ENCODE measurements at regions of chr20 and their contacts with region 1.

Region 1: GRCh38 chr20:45362804-45363610 is at the start of gene SYS1:
- DNase-seq: peak; percentile 99
- H3K4me3 Mint-ChIP-seq: peak within 1 kb of the TSS; percentile 97
- H3K27ac Mint-ChIP-seq: peak within 1 kb of the TSS; percentile 95
- H3K4me1 Mint-ChIP-seq: peaks cover 30% of the 10 kb centered on the region
- H3K27me3 Mint-ChIP-seq: no peaks in the 10 kb centered on the region
- CTCF ChIP-seq: peak; percentile 67
- total RNA-seq, gene SYS1: 19.1 and 28.2 TPM in 2 replicates

Region 2: GRCh38 chr20:45337367-45338120 is 25.5 kb before region 1 on chr20:
- CTCF ChIA-PET with region 1: interaction called, 82 read pairs
- POLR2A ChIA-PET with region 1: interaction called, 1,328 read pairs
- intact Hi-C with region 1: loop called (anchors 1 kb)
- DNase-seq: peak; percentile 66
- H3K4me3 Mint-ChIP-seq: peak overlapping the region; percentile 45
- H3K27ac Mint-ChIP-seq: peak overlapping the region; percentile 97
- H3K4me1 Mint-ChIP-seq: peaks cover 58% of the 10 kb centered on the region
- H3K27me3 Mint-ChIP-seq: no peaks in the 10 kb centered on the region
- CTCF ChIP-seq: no peak

Region 3: GRCh38 chr20:45373353-45374100 is 10.5 kb after region 1 on chr20:
- CTCF ChIA-PET with region 1: interaction called, 61 read pairs
- POLR2A ChIA-PET with region 1: interaction called, 7 read pairs
- intact Hi-C with region 1: no loop called
- DNase-seq: peak; percentile 92
- H3K4me3 Mint-ChIP-seq: peak overlapping the region; percentile 40
- H3K27ac Mint-ChIP-seq: no peak overlapping the region
- H3K4me1 Mint-ChIP-seq: peaks cover 5% of the 10 kb centered on the region
- H3K27me3 Mint-ChIP-seq: no peaks in the 10 kb centered on the region
- CTCF ChIP-seq: peak; percentile 74

Region 4: GRCh38 chr20:45406259-45407066 is 43.5 kb after region 1 on chr20:
- CTCF ChIA-PET with region 1: interaction called, 10 read pairs
- POLR2A ChIA-PET with region 1: interaction called, 4 read pairs
- intact Hi-C with region 1: no loop called
- DNase-seq: peak; percentile 40
- H3K4me3 Mint-ChIP-seq: peak overlapping the region; percentile 71
- H3K27ac Mint-ChIP-seq: no peak overlapping the region
- H3K4me1 Mint-ChIP-seq: no peaks in the 10 kb centered on the region
- H3K27me3 Mint-ChIP-seq: no peaks in the 10 kb centered on the region
- CTCF ChIP-seq: no peak